Right lobe of liver (tissue), 6 donors: ENCODE measurements at regions of chr10 and their contacts with region 1.

Region 1: GRCh38 chr10:21265621-21266020 is 259.9 kb downstream of the SKIDA1 start:
- DNase-seq: no peak
- ATAC-seq: peak in 1 of 4 donors; percentile 33
- H3K4me3 ChIP-seq: no peak overlapping the region
- H3K27ac ChIP-seq: no peak overlapping the region
- H3K4me1 ChIP-seq: no peaks in the 10 kb centered on the region
- H3K27me3 ChIP-seq: no peaks in the 10 kb centered on the region
- CTCF ChIP-seq: no peak
- POLR2A ChIP-seq: no peak

Region 2: GRCh38 chr10:20863008-20863407 is 402.6 kb before region 1 on chr10:
- intact Hi-C with region 1: loop called in 1 of 2 experiments (anchors 10 kb)
- DNase-seq: no peak
- ATAC-seq: no peak
- H3K4me3 ChIP-seq: no peak overlapping the region
- H3K27ac ChIP-seq: no peak overlapping the region
- H3K4me1 ChIP-seq: no peaks in the 10 kb centered on the region
- H3K27me3 ChIP-seq: no peaks in the 10 kb centered on the region
- CTCF ChIP-seq: no peak
- POLR2A ChIP-seq: no peak

Region 3: DNA sequence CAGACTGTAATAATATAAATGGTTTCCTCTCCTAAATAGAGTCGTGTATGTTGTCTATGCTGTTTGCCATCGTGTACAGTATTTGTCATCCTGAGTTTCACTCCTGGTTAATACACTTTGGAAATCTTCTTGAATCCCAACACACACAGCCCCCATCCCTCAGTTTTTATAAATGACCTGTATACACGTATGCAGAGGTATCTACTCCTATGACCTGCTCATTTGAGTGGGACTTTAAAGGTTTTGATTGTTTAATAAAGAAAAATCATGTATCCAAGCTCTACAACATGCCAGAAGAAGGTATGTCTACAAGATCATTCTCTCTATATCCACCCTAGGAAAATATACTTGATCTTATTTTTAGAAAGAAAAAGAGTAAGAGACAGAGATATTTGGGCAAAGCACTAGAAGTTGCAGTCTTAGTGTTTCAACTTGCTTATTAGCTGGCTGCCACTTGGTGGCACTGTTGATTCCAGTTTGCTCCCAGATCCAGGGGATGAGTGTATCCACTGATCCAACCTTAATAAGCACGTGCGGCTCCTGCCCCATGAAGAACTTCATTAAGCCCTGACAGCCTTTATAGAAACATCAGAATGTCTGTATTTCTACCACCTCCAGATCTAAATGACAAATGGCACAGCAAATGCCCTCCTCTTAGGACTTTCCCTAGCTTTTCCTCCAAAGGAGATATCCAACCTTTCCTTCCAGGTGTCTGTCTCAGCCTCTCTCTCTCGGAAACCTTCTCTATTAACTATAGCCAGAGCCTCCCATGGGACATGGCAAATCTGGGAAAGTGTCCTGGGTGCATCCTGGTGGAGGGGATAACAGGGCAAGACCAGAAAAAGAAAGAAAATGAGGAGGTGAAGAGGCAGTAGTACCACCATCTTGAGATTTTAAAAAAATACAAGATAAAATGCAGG is 187.0 kb before region 1 on chr10:
- intact Hi-C with region 1: loop called (anchors 5 to 10 kb)
- DNase-seq: peak in 2 of 3 donors; percentile 43 to 69
- ATAC-seq: peak; percentile 94 to 97 (median 95)
- H3K4me3 ChIP-seq: no peak overlapping the region
- H3K27ac ChIP-seq: no peak overlapping the region
- H3K4me1 ChIP-seq: no peaks in the 10 kb centered on the region
- H3K27me3 ChIP-seq: no peaks in the 10 kb centered on the region
- CTCF ChIP-seq: peak; percentile 69 to 81 (median 76)
- POLR2A ChIP-seq: no peak